A549 (cell line): ENCODE measurements at regions of chr2 and their contacts with region 1.

Region 1: GRCh38 chr2:39124000-39124745 is 3.3 kb upstream of the SOS1 start:
- DNase-seq: peak; percentile 89 to 99
- ATAC-seq: peak; percentile 73 to 88
- H3K4me3 ChIP-seq: peak overlapping the region; percentile 61
- H3K27ac ChIP-seq: peak overlapping the region; percentile 84 to 89
- H3K4me1 ChIP-seq: peaks cover 14% of the 10 kb centered on the region; the same call in 2 of the 3 replicates
- CTCF ChIP-seq: peak; percentile 65
- EP300 ChIP-seq: no peak
- POLR2A ChIP-seq: peak; percentile 77
- RAD21 ChIP-seq: peak in 1 of 2 experiments; percentile 68; a peak in 3 of 5 replicates

Region 2: DNA sequence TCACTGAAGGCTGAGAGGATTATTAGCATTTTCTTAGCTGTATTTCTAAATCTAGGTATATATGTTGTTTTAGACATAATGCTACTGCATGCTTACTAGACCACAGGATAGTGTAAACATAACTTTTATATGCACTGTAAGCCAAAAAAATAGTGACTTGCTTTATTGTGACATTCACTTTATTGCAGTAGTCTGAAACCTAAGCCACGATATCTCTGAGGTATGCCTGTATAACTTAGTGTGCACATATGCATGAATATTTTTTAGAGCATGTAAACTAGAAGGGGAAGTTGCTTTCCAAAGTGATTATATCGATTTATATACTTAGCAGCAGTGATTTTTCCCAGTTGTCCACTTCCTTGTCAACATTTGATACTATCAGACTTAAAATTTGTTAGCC is 85.1 kb before region 1 on chr2:
- CTCF ChIA-PET with region 1: no interaction called
- POLR2A ChIA-PET with region 1: no interaction called
- DNase-seq: no peak
- ATAC-seq: no peak
- H3K4me3 ChIP-seq: no peak overlapping the region
- H3K27ac ChIP-seq: no peak overlapping the region
- H3K4me1 ChIP-seq: no peaks in the 10 kb centered on the region
- CTCF ChIP-seq: no peak
- EP300 ChIP-seq: no peak
- POLR2A ChIP-seq: no peak
- RAD21 ChIP-seq: no peak

Region 3: GRCh38 chr2:39059366-39059952 is 64.7 kb before region 1 on chr2:
- CTCF ChIA-PET with region 1: interaction called, 16 read pairs
- POLR2A ChIA-PET with region 1: no interaction called
- DNase-seq: peak; percentile 12 to 59
- ATAC-seq: peak in 1 of 2 experiments; percentile 63; a peak in 3 of 6 replicates
- H3K4me3 ChIP-seq: no peak overlapping the region
- H3K27ac ChIP-seq: no peak overlapping the region
- H3K4me1 ChIP-seq: no peaks in the 10 kb centered on the region
- CTCF ChIP-seq: peak; percentile 95
- EP300 ChIP-seq: no peak
- POLR2A ChIP-seq: no peak
- RAD21 ChIP-seq: peak; percentile 91 to 94

Region 4: GRCh38 chr2:39107719-39108273 is 16.4 kb before region 1 on chr2:
- CTCF ChIA-PET with region 1: interaction called, 19 read pairs
- POLR2A ChIA-PET with region 1: interaction called, 6 read pairs
- DNase-seq: no peak
- ATAC-seq: peak; percentile 35 to 50; a peak in 4 of 6 replicates
- H3K4me3 ChIP-seq: no peak overlapping the region
- H3K27ac ChIP-seq: no peak overlapping the region
- H3K4me1 ChIP-seq: peaks cover 15% of the 10 kb centered on the region
- CTCF ChIP-seq: no peak
- EP300 ChIP-seq: no peak
- POLR2A ChIP-seq: no peak
- RAD21 ChIP-seq: no peak

Region 5: DNA sequence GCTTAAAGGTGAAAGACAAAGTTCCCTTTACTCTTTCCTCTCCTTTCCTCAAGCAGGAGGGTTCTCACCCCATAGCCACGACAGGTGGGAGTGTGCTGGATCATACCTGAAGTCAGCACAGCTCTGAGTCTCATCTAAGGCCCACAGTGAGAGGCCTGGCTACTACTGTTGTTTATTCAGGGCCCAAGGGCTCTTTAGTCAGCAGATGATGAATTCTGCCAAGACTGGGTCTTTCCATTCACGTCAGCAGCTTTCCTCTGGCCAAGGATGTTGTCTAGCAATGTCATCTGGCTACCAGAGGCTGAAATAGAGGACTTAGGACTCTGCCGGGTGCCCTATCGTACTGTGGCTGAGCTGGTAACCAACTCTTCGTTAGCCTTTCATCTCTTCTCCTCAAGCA is 963.3 kb after region 1 on chr2:
- CTCF ChIA-PET with region 1: no interaction called
- POLR2A ChIA-PET with region 1: no interaction called
- DNase-seq: no peak
- ATAC-seq: no peak
- H3K4me3 ChIP-seq: no peak overlapping the region
- H3K27ac ChIP-seq: no peak overlapping the region
- H3K4me1 ChIP-seq: no peaks in the 10 kb centered on the region
- CTCF ChIP-seq: no peak
- EP300 ChIP-seq: no peak
- POLR2A ChIP-seq: no peak
- RAD21 ChIP-seq: no peak